PC-9 (cell line): ENCODE measurements at regions of chr1 and their contacts with region 1.

Region 1: GRCh38 chr1:170765712-170766330 is 101.9 kb downstream of the PRRX1 start:
- DNase-seq: no peak
- H3K4me3 ChIP-seq: no peak overlapping the region
- H3K27ac ChIP-seq: no peak overlapping the region
- H3K4me1 ChIP-seq: no peaks in the 10 kb centered on the region
- H3K27me3 ChIP-seq: no peaks in the 10 kb centered on the region
- CTCF ChIP-seq: peak; percentile 37; the same call in 1 of the 2 replicates

Region 2: GRCh38 chr1:169928438-169929209 is 837.2 kb before region 1 on chr1:
- CTCF ChIA-PET with region 1: no interaction called
- POLR2A ChIA-PET with region 1: no interaction called
- intact Hi-C with region 1: loop called (anchors 10 kb)
- DNase-seq: peak in 1 of 2 experiments; percentile 54
- H3K4me3 ChIP-seq: no peak overlapping the region
- H3K27ac ChIP-seq: no peak overlapping the region
- H3K4me1 ChIP-seq: peaks cover 12% of the 10 kb centered on the region
- H3K27me3 ChIP-seq: no peaks in the 10 kb centered on the region
- CTCF ChIP-seq: peak; percentile 83

Region 3: DNA sequence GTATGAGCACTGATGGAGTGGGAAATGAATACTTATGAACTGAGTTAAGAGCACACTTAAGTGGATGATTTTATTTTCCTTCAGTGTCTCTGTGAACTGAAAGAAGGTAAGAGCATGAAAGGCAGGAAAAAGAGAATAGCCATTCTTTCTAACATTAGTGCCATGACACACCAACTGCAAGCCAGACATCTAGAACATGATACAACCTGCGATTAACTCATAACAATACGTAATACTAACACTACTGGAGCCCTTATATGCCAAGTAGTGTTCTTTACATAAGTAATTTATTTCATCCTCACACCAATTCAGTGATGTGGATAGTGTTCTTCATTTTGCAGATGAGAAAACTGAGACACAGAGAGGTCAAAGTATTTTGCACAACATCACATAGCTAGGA is 45.2 kb before region 1 on chr1:
- CTCF ChIA-PET with region 1: no interaction called
- POLR2A ChIA-PET with region 1: no interaction called
- intact Hi-C with region 1: no loop called
- DNase-seq: no peak
- H3K4me3 ChIP-seq: no peak overlapping the region
- H3K27ac ChIP-seq: no peak overlapping the region
- H3K4me1 ChIP-seq: no peaks in the 10 kb centered on the region
- H3K27me3 ChIP-seq: no peaks in the 10 kb centered on the region
- CTCF ChIP-seq: no peak

Region 4: GRCh38 chr1:172054172-172054571 is 1288.4 kb after region 1 on chr1:
- CTCF ChIA-PET with region 1: no interaction called
- POLR2A ChIA-PET with region 1: no interaction called
- intact Hi-C with region 1: no loop called
- DNase-seq: no peak
- H3K4me3 ChIP-seq: no peak overlapping the region
- H3K27ac ChIP-seq: no peak overlapping the region
- H3K4me1 ChIP-seq: no peaks in the 10 kb centered on the region
- H3K27me3 ChIP-seq: no peaks in the 10 kb centered on the region
- CTCF ChIP-seq: no peak